HepG2 (cell line): ENCODE measurements at regions of chr3 and their contacts with region 1.

Region 1: GRCh38 chr3:152193673-152194267 is 75.0 kb upstream of the MBNL1 start:
- DNase-seq: no peak
- ATAC-seq: peak; percentile 54
- H3K4me3 ChIP-seq: peak overlapping the region; percentile 25 to 55 (median 46); a peak in 5 of 6 replicates
- H3K27ac ChIP-seq: no peak overlapping the region
- H3K4me1 ChIP-seq: 0 out of 2 replicates have a peak, but pooled peaks cover 12% of the 10 kb centered on the region
- H3K27me3 ChIP-seq: no peaks in the 10 kb centered on the region
- CTCF ChIP-seq: no peak
- EP300 ChIP-seq: no peak
- POLR2A ChIP-seq: no peak
- RAD21 ChIP-seq: no peak

Region 2: DNA sequence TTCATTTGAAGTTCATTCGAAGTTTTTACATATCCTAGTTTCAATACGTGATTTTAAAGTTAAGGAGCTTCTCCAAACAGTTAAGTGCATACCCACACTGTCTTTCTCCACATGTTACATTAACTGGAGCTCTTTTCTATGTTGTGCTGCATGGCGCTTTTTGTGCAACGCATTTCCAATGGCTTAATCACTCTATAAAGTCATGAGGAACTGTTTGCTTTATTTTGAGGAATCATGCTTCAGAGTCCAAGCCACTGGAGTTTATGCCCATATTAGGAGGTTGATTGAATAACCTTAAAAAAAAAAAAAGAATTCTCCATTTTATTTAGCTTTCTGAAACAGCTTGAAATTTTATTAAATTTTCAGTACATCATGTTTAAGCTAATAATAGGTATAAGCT is 34.4 kb before region 1 on chr3:
- CTCF ChIA-PET with region 1: no interaction called
- POLR2A ChIA-PET with region 1: no interaction called
- in situ Hi-C with region 1: no loop called
- intact Hi-C with region 1: no loop called
- DNase-seq: no peak
- ATAC-seq: no peak
- H3K4me3 ChIP-seq: no peak overlapping the region
- H3K27ac ChIP-seq: no peak overlapping the region
- H3K4me1 ChIP-seq: no peaks in the 10 kb centered on the region
- H3K27me3 ChIP-seq: no peaks in the 10 kb centered on the region
- CTCF ChIP-seq: no peak
- EP300 ChIP-seq: no peak
- POLR2A ChIP-seq: no peak
- RAD21 ChIP-seq: no peak

Region 3: DNA sequence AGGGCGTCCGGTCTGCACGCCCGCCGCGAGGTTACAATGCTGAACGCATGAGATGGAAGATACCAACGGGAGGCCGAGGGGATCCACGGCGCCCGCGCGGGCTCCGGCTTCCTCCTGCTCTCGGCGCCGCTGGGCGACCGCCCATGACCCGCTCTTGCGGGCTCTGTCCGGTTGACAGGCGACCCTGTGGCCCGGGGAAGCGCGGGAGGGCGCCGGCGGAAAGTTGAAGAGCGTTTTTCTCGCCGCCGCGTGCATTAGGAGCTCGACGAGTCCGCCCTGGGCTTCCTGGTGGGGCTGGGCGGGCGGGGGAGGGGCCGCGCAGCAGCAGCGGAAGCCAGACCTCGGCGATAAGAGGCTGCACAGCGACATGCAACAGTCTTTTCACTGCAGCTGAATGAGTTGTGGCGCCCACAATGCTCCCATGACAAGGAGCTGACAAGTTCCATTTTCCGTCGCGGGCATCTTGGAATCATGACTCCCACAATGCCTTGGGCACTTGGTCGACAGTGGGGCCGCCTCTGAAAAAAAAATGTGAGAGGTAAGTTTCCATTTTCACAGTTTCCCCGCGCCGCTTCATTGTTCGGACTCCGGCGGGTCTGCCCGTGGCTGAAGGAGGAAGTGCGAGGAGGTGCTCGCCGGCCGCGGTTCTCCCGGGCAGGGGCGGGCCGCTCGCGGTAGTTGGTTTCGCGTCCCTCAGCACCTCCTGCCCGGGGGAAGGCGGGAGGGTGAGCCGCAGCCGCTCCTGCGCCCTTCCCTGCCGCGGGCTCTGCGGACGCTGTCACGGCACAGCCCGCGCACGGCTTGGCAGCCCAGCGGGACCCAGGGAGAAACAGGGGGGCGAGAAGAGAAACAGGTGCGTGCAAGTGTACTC is 75.0 kb after region 1 on chr3 and contains the start of gene MBNL1:
- CTCF ChIA-PET with region 1: no interaction called
- POLR2A ChIA-PET with region 1: no interaction called
- in situ Hi-C with region 1: no loop called
- intact Hi-C with region 1: no loop called
- DNase-seq: peak; percentile 70
- ATAC-seq: peak; percentile 81
- H3K4me3 ChIP-seq: peak within 1 kb of the TSS; percentile 81 to 87 (median 86)
- H3K27ac ChIP-seq: peak within 1 kb of the TSS; percentile 97
- H3K4me1 ChIP-seq: peaks cover 56% of the 10 kb centered on the region
- H3K27me3 ChIP-seq: no peaks in the 10 kb centered on the region
- CTCF ChIP-seq: no peak
- EP300 ChIP-seq: no peak
- POLR2A ChIP-seq: peak; percentile 85 to 93
- RAD21 ChIP-seq: 0 out of 2 replicates have a peak, but pooled peaks have one; percentile 10
- total RNA-seq, gene MBNL1: 55.4 TPM in 2 replicates

Region 4: DNA sequence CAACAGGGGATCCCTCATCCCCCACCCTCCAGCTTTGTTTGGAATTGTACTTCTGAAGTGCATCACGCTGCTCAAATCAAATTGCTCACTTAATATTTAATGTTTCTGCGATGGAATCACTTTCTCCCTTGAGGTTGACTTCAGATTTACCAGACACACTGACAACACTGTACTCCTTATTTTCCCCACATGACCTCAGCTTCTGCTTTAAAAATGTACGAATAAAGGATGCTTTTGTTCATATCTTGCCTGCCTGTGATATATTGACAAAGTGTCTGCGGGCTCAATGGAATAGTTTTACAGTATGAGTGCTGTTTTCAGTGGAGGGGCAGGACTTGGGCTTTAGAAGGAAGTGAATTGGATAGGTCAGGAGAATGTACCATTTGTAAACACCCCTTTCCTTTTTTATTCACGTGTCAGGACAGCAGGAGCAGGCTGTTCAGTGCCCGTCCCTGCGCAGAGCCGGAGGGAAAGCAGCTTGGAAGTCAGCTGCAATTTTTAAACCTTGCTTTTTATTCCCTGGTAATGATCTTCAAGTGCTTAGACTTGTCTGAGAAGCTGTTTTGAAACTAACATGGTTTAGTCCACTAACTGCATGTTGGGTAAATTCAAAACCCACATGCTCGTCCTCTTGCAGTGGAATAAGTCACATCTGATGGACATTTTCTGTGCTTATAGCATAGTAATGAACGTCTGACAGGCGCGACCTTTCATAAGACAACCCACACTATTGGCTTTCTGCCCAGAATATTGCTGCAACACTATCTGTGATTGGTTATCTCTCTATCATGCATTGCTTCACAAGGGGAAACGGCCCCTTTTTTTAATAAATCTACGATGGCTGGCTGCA is 104.8 kb after region 1 on chr3:
- CTCF ChIA-PET with region 1: no interaction called
- POLR2A ChIA-PET with region 1: no interaction called
- in situ Hi-C with region 1: no loop called
- intact Hi-C with region 1: loop called (anchors 2 kb)
- DNase-seq: peak; percentile 97
- ATAC-seq: peak; percentile 90
- H3K4me3 ChIP-seq: peak overlapping the region; percentile 39 to 70 (median 46)
- H3K27ac ChIP-seq: peak overlapping the region; percentile 97
- H3K4me1 ChIP-seq: peaks cover 78% of the 10 kb centered on the region
- H3K27me3 ChIP-seq: no peaks in the 10 kb centered on the region
- CTCF ChIP-seq: no peak
- EP300 ChIP-seq: peak in 1 of 2 experiments; percentile 23; a peak in 1 of 4 replicates
- POLR2A ChIP-seq: peak; percentile 23 to 89; a peak in 2 of 4 replicates
- RAD21 ChIP-seq: no peak

Region 5: DNA sequence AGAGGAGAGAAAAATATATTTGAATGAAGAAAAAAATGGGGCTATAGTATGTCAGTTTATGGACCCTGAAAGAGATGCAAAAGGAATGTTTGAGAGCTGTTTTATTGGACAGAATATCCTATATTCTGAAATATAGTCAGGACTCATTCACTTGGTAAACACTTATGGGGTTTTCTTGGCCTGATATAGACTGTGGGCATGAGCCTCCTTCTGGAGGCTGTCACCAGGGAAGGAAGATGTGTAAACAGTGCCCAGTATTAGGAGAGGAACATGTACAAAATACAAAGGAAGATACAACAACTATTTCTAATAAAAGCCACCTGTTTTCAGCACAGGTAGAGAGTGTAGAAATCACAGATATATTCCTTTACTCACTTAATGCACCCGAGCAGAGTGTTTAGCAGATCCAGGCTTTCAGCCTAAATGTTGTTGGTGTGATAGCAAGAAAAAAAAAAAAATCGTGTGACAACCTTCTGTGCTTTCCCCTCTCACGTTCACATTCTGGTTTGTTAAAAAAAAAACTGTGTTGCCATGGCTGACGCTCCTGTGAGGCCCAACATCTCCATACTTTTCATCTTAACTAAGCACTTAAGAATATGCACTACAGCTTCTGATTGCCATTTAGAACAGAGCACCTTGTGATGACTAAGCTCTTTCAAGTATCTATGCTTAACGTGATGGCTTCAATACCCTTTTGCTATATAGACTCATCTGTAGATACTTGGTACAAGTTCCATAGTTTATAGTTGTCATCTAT is 209.1 kb after region 1 on chr3:
- CTCF ChIA-PET with region 1: no interaction called
- POLR2A ChIA-PET with region 1: no interaction called
- in situ Hi-C with region 1: no loop called
- intact Hi-C with region 1: no loop called
- DNase-seq: no peak
- ATAC-seq: no peak
- H3K4me3 ChIP-seq: no peak overlapping the region
- H3K27ac ChIP-seq: no peak overlapping the region
- H3K4me1 ChIP-seq: peaks cover 29% of the 10 kb centered on the region
- H3K27me3 ChIP-seq: no peaks in the 10 kb centered on the region
- CTCF ChIP-seq: no peak
- EP300 ChIP-seq: no peak
- POLR2A ChIP-seq: no peak
- RAD21 ChIP-seq: no peak